Right ventricle myocardium inferior (tissue), 1 donor: ENCODE measurements at regions of chrX and their contacts with region 1.

Region 1: DNA sequence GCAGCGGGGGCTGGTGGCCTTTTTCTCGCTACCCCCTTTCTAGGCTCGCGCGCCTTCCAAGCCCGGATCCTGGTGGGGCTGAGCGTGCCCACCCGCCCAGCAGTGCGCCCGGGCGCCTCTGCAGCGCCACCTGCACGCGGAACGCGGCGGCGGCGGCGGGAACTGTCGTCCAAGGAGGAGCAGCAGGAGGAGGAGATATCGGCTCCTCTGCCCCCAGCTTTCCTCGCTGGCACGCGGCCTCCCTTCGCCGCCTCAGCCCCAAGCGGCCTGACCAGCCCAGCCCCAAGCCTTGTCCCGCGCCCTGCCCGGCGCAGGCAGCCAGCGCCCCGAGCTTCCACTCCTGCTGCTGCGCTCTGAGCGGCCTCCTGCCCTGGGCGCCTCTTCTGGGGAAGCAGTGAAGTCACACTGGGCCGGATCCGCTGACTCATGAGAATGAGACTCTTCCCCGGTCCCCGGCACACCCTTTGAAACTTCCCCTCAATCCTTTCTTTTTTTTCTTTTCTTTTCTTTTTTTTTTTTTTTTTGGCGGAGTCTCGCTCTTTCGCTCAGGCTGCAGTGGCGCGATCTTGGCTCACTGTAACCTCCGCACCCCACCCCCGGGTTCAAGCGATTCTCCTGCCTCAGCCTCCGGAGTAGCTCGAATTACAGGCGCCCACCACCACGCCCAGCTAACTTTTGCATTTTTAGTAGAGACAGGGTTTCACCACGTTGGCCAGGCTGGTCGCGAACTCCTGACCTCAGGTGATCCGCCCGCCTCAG is 10.6 kb upstream of the ELF4 start:
- DNase-seq: peak; percentile 91
- ATAC-seq: peak; percentile 83

Region 2: GRCh38 chrX:130079824-130080406 is 41.0 kb before region 1 on chrX:
- intact Hi-C with region 1: loop called (anchors 2 kb)
- DNase-seq: no peak
- ATAC-seq: peak; percentile 67

Region 3: GRCh38 chrX:130165703-130166502 is 45.0 kb after region 1 on chrX and contains the start of gene AIFM1:
- intact Hi-C with region 1: loop called (anchors 2 kb)
- DNase-seq: peak; percentile 95
- ATAC-seq: peak; percentile 99
- total RNA-seq, gene AIFM1: 132 TPM

Region 4: DNA sequence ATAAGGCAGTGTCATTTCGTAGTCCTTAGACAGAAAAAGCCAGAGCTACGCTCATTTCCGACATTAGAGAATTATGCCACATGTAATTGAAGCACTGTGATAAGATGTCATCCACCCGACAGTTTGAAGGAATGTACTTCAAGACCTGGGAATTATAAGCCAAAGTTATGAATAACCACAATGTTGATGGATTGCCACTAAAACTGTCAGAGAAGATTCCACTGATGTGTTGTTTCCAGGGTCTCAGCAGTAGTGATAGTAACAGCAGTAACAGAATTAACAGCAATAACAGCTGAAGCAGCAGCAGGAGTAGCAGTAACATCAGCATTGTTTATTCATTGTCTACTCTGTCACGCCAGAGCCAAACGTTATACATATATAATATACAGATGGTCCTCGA is 75.5 kb after region 1 on chrX:
- intact Hi-C with region 1: no loop called
- DNase-seq: no peak
- ATAC-seq: no peak